ENCODE measurements at regions of chr2 and their contacts with region 1.

Region 1: DNA sequence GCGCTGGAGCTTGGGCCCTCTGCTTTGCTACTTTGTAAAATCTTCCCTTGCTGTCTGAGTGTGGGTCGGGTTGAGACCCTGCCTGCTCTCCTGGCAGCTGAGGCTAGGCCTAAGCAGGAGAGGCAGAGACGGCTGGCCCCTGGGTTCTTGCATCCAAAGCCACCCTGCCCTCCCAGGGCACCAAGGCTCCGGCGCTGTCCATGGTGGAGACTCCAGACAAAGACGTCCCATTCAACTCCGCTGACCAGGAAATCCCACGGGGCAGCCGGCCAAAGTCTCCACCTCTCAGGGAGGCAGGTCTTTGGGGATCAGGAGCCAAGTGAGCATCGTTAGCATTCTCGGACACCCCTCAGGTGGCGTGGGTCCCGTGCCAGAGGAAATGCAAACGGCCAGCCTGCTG is 2.6 kb upstream of the PRLH start:
- DNase-seq: no peak
- ATAC-seq: no peak
- H3K4me3 Mint-ChIP-seq: no peak overlapping the region
- H3K27ac Mint-ChIP-seq: no peak overlapping the region
- H3K4me1 Mint-ChIP-seq: no peaks in the 10 kb centered on the region
- H3K27me3 Mint-ChIP-seq: peaks cover 10% of the 10 kb centered on the region
- CTCF ChIP-seq: no peak

Region 2: DNA sequence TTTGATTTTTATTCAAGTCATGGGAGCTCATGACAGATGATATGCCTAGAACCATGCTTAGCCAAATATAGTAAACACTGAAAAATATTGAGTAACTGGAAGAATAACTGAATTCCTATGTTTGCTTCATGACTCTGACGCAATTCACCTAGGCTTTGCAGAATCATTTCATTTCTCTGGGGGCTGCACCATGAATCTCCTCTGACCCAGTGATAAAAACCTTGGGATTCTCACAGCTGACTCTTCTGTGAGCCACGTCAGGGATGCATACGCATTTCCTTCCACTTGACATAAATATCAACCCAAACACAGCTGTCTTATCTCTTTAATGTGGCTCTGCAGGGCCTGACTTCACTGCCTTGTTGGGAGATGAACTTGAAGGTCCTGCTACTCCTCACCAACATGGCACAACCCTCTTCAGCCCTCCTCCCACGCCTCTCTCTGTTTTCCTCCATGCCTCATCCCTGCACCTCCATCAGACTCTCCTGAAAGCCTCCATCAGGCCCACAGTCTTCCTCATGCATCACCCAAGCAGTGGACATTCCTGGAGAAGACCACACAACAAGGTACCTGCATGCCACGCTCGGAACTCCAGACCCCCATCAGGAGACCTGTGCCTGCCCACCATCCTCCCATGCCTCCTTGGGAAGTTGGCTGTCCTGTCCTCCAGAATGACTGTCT is 179.7 kb before region 1 on chr2:
- CTCF ChIA-PET with region 1: no interaction called
- POLR2A ChIA-PET with region 1: no interaction called
- intact Hi-C with region 1: no loop called
- DNase-seq: no peak
- ATAC-seq: no peak
- H3K4me3 Mint-ChIP-seq: no peak overlapping the region
- H3K27ac Mint-ChIP-seq: no peak overlapping the region
- H3K4me1 Mint-ChIP-seq: no peaks in the 10 kb centered on the region
- H3K27me3 Mint-ChIP-seq: no peaks in the 10 kb centered on the region
- CTCF ChIP-seq: no peak

Region 3: GRCh38 chr2:237529452-237530402 is 34.1 kb before region 1 on chr2:
- CTCF ChIA-PET with region 1: no interaction called
- POLR2A ChIA-PET with region 1: no interaction called
- intact Hi-C with region 1: loop called (anchors 5 kb)
- DNase-seq: no peak
- ATAC-seq: no peak
- H3K4me3 Mint-ChIP-seq: no peak overlapping the region
- H3K27ac Mint-ChIP-seq: no peak overlapping the region
- H3K4me1 Mint-ChIP-seq: no peaks in the 10 kb centered on the region
- H3K27me3 Mint-ChIP-seq: no peaks in the 10 kb centered on the region
- CTCF ChIP-seq: no peak

Measured in activated CD8-positive, alpha-beta T cell treated with anti-CD3 and anti-CD28 coated beads for 36 hours (primary cell).